ENCODE measurements at regions of chr9 and their contacts with region 1.

Region 1: GRCh38 chr9:128271108-128271507 is 4.7 kb downstream of the GOLGA2 start:
- DNase-seq: no peak
- ATAC-seq: no peak
- H3K4me3 ChIP-seq: no peak overlapping the region
- H3K27ac ChIP-seq: no peak overlapping the region
- H3K4me1 ChIP-seq: peaks cover 3% of the 10 kb centered on the region
- H3K27me3 ChIP-seq: no peaks in the 10 kb centered on the region
- CTCF ChIP-seq: no peak
- POLR2A ChIP-seq: no peak
- RAD21 ChIP-seq: no peak

Region 2: DNA sequence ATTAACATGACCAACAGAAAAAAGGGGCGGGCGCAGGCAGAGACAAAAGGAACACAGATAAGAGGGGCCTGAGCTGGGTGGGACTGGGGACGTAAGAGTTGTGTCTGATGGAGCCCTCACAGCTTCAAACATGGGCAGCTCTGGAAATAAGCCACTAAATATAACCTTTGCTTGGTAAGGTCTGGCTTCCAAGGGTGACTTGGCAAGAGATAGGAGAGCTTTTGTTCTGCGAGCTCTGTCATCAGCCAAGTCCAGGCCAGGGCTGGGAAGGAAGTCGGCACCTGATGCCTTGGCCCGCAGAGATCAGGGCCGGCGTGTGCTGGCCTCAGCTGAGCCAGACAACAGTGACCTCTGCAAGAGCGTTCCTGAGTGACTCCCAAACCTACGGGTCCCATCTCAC is 39.4 kb after region 1 on chr9:
- CTCF ChIA-PET with region 1: no interaction called
- POLR2A ChIA-PET with region 1: interaction called, 13 read pairs
- dilution Hi-C with region 1: no loop called
- in situ Hi-C with region 1: no loop called
- intact Hi-C with region 1: no loop called
- DNase-seq: no peak
- ATAC-seq: no peak
- H3K4me3 ChIP-seq: no peak overlapping the region
- H3K27ac ChIP-seq: no peak overlapping the region
- H3K4me1 ChIP-seq: peaks cover 4% of the 10 kb centered on the region
- H3K27me3 ChIP-seq: no peaks in the 10 kb centered on the region
- CTCF ChIP-seq: no peak
- POLR2A ChIP-seq: no peak
- RAD21 ChIP-seq: no peak